H1 (cell line): ENCODE measurements at regions of chrX and their contacts with region 1.

Region 1: DNA sequence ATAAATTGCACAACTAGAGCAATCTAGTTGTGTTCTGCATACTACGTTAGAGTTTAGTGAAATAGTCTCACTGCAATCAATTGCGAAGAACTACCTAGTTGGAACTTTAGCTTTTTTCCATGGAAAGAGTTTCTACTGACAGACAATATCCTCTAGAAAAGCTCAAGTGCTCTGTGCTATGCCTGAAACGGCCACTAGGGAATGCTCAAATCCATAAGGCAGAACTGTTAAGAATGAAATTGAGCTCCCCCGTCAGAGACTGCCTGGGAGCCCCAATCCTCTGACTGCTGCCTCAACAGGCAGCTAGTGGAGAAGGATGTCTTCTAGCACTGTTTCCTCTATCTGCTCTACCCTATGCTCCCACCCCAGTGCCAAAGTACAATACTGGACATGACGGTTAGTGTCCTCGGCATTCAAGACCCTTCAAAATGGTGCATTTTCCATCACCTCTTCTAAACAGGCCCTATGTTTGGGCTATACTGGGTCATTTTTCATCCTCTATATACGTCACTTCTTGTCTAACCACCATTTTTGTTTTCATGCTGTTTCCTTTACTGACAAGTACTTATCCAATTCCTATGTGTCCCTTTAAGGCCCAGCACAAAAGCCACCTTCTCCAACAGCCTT is 35.3 kb downstream of the FRMD7 start:
- DNase-seq: peak; percentile 31 to 57
- H3K4me3 ChIP-seq: no peak overlapping the region
- H3K27ac ChIP-seq: no peak overlapping the region
- H3K4me1 ChIP-seq: no peaks in the 10 kb centered on the region
- H3K27me3 ChIP-seq: no peaks in the 10 kb centered on the region
- CTCF ChIP-seq: peak in 2 of 3 experiments; percentile 75 to 79; a peak in 3 of 4 replicates
- EP300 ChIP-seq: no peak
- POLR2A ChIP-seq: no peak
- RAD21 ChIP-seq: peak; percentile 78 to 87

Region 2: DNA sequence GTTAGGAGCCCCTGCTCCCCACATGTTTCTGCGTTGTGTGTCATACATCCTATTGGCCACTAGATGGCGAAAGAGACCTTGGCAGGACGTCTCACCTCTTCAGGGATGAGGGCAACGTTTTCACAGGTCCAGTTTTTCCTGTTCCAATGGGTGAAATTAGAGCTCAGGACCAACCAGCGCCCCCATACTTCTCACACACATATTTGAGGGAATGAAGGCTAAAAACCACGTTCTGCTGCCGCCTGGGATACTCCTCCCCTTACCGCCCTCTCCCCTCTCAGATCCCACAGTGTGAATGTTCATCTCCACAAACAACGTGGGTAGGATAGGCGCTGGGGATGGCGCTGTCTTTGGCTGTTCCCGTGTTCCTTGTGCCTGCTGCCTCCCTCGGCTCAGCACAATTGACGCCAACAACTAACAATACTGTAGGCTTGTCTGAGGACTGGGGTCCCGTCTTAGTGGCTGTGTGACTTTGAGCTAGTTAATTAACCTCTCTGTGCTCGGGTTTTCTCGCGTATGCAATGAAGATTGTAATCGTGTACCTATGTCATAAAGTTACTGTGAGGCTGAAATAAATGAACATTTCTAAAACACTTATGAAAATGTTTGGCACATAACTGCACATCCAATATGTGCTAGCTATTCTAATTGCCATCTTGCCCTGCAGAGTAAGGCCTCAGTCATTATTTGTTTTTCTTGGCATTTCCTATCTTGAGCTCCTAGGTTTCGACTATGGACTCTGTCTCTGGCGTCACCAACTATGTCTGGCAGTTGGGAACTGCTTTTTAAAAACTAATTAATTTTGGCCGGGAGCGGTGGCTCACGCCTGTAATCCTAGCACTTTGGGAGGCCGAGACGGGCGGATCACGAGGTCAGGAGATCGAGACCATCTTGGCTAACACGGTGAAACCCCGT is 250.8 kb before region 1 on chrX:
- CTCF ChIA-PET with region 1: interaction called, 10 read pairs
- POLR2A ChIA-PET with region 1: no interaction called
- DNase-seq: peak in 1 of 2 experiments; percentile 49
- H3K4me3 ChIP-seq: peak overlapping the region in 1 of 4 experiments; percentile 34; a peak in 1 of 8 replicates
- H3K27ac ChIP-seq: no peak overlapping the region
- H3K4me1 ChIP-seq: no peaks in the 10 kb centered on the region
- H3K27me3 ChIP-seq: no peaks in the 10 kb centered on the region
- CTCF ChIP-seq: peak; percentile 59 to 70 (median 64)
- EP300 ChIP-seq: no peak
- POLR2A ChIP-seq: no peak
- RAD21 ChIP-seq: peak; percentile 78 to 85

Region 3: DNA sequence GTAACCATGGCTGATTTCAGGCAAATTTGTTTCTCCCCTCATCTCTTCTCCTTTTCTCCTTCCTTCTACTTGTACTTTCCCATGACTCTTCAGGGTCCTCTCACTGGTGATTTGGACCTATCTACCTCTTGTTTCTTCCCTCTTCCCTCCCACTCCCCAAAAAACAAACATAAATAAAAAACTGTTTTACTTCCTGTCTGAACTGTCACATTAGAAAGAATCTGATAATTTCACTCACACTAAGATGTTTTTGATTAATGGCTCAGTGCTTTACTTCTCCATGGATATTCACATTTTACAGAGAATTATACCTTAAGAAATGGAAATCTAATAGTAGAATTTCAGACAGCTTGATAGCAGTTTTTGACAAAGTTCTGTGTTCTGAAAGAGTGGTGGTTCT is 62.3 kb before region 1 on chrX:
- CTCF ChIA-PET with region 1: no interaction called
- POLR2A ChIA-PET with region 1: no interaction called
- DNase-seq: no peak
- H3K4me3 ChIP-seq: no peak overlapping the region
- H3K27ac ChIP-seq: no peak overlapping the region
- H3K4me1 ChIP-seq: peaks cover 0 to 10% (median 3%) of the 10 kb centered on the region in 4 experiments; a peak in 3 of 7 replicates
- H3K27me3 ChIP-seq: no peaks in the 10 kb centered on the region
- CTCF ChIP-seq: no peak
- EP300 ChIP-seq: no peak
- POLR2A ChIP-seq: no peak
- RAD21 ChIP-seq: no peak

Region 4: GRCh38 chrX:132077414-132077813 is 15.1 kb before region 1 on chrX:
- CTCF ChIA-PET with region 1: interaction called, 11 read pairs
- POLR2A ChIA-PET with region 1: no interaction called
- DNase-seq: no peak
- H3K4me3 ChIP-seq: no peak overlapping the region
- H3K27ac ChIP-seq: no peak overlapping the region
- H3K4me1 ChIP-seq: no peaks in the 10 kb centered on the region
- H3K27me3 ChIP-seq: no peaks in the 10 kb centered on the region
- CTCF ChIP-seq: no peak
- EP300 ChIP-seq: no peak
- POLR2A ChIP-seq: no peak
- RAD21 ChIP-seq: no peak

Region 5: GRCh38 chrX:132219343-132219768 is 126.8 kb after region 1 on chrX and contains the start of gene RAP2C:
- CTCF ChIA-PET with region 1: interaction called, 17 read pairs
- POLR2A ChIA-PET with region 1: no interaction called
- DNase-seq: peak; percentile 9 to 52
- H3K4me3 ChIP-seq: peak within 1 kb of the TSS; percentile 57 to 85 (median 64)
- H3K27ac ChIP-seq: peak within 1 kb of the TSS; percentile 45; the same call in 1 of the 2 replicates
- H3K4me1 ChIP-seq: no peaks in the 10 kb centered on the region
- H3K27me3 ChIP-seq: no peaks in the 10 kb centered on the region
- CTCF ChIP-seq: peak; percentile 56 to 65 (median 62)
- EP300 ChIP-seq: no peak
- POLR2A ChIP-seq: no peak
- RAD21 ChIP-seq: peak; percentile 53 to 58
- total RNA-seq, gene RAP2C: 20.5 TPM in 2 replicates